ENCODE measurements at regions of chr12 and their contacts with region 1.

Region 1: GRCh38 chr12:103956516-103957027 is 9.1 kb upstream of the TDG start:
- DNase-seq: no peak
- H3K4me3 ChIP-seq: peak overlapping the region; percentile 71 to 88 (median 86)
- H3K4me3 Mint-ChIP-seq: peak overlapping the region; percentile 88 to 94
- H3K27ac ChIP-seq: peak overlapping the region; percentile 67 to 85
- H3K27ac Mint-ChIP-seq: peak overlapping the region; percentile 93 to 99 (median 96)
- H3K4me1 ChIP-seq: peaks cover 13 to 18% of the 10 kb centered on the region in 2 donors
- H3K4me1 Mint-ChIP-seq: peaks cover 15% of the 10 kb centered on the region
- H3K27me3 ChIP-seq: no peaks in the 10 kb centered on the region
- H3K27me3 Mint-ChIP-seq: peaks cover 0 to 2% (median 2%) of the 10 kb centered on the region in 3 donors
- CTCF ChIP-seq: no peak

Region 2: DNA sequence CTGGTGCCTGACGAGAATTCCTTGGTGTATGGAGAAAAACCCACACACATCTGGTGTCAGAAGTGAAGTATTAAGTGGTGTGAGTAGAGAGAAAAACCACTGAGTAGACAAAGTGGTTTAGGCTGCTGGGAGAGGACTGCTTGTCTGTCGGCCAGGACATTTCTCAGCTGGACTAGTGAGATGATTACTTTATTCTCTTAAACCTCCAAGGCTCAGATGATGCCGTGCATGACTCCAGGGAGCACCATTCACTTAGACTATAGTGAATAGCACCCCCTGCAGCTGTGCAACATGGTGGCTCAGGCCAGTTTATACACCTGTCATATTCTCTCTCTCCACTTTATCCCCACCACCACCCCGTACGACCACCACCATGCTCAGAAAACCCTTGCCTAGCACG is 209.9 kb after region 1 on chr12:
- intact Hi-C with region 1: no loop called
- DNase-seq: no peak
- H3K4me3 ChIP-seq: no peak overlapping the region
- H3K4me3 Mint-ChIP-seq: no peak overlapping the region
- H3K27ac ChIP-seq: no peak overlapping the region
- H3K27ac Mint-ChIP-seq: no peak overlapping the region
- H3K4me1 ChIP-seq: no peaks in the 10 kb centered on the region
- H3K4me1 Mint-ChIP-seq: peaks cover 4% of the 10 kb centered on the region
- H3K27me3 ChIP-seq: no peaks in the 10 kb centered on the region
- H3K27me3 Mint-ChIP-seq: peaks cover 0 to 2% (median 0%) of the 10 kb centered on the region in 3 donors
- CTCF ChIP-seq: no peak

Region 3: GRCh38 chr12:105138248-105138647 is 1181.7 kb after region 1 on chr12:
- intact Hi-C with region 1: loop called in 1 of 2 experiments (anchors 10 kb)
- DNase-seq: no peak
- H3K4me3 ChIP-seq: no peak overlapping the region
- H3K4me3 Mint-ChIP-seq: no peak overlapping the region
- H3K27ac ChIP-seq: no peak overlapping the region
- H3K27ac Mint-ChIP-seq: no peak overlapping the region
- H3K4me1 ChIP-seq: no peaks in the 10 kb centered on the region
- H3K4me1 Mint-ChIP-seq: peaks cover 2% of the 10 kb centered on the region
- H3K27me3 ChIP-seq: no peaks in the 10 kb centered on the region
- H3K27me3 Mint-ChIP-seq: peaks cover 0 to 1% (median 0%) of the 10 kb centered on the region in 3 donors
- CTCF ChIP-seq: no peak

Measured in CD14-positive monocyte (primary cell).